Activated naive CD4-positive, alpha-beta T cell treated with anti-CD3 and anti-CD28 coated beads for 36 hours (primary cell): ENCODE measurements at regions of chr14 and their contacts with region 1.

Region 1: GRCh38 chr14:22505697-22506377 is 83.2 kb downstream of the DAD1 start:
- DNase-seq: no peak
- H3K4me3 Mint-ChIP-seq: peak overlapping the region; percentile 84
- H3K27ac Mint-ChIP-seq: peak overlapping the region; percentile 98
- H3K4me1 Mint-ChIP-seq: peaks cover 22% of the 10 kb centered on the region
- H3K27me3 Mint-ChIP-seq: no peaks in the 10 kb centered on the region

Region 2: DNA sequence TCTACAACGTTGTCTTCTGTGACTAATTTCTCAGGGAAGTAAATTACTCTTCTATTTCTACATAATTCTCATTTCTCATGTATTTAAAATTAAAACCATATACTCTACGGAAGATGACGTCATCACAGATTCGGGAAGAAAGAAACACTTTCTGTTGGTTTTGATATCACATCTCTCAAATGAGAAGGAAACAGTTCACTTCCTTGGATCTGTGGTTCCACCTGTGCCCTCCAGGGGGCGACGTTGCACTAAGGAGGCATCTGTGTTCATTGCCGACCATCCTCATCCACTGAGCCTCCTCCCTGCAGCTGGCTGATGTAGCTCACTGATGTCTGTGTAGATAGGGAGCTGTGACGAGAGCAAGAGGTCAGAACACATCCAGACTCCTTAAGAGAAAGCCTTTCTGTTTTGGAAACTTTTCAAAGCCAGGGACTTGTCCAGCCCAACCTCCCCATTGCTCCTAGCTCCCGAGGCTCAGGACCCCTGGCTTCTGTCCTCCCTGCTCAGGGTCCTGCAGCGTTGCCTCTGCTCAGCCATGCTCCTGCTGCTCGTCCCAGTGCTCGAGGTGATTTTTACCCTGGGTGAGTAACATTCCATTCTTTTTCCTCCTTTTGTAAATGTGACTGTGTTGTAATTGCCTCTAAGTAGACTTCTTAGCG is 659.5 kb before region 1 on chr14:
- CTCF ChIA-PET with region 1: no interaction called
- intact Hi-C with region 1: loop called (anchors 5 kb)
- DNase-seq: peak; percentile 88
- H3K4me3 Mint-ChIP-seq: peak overlapping the region; percentile 88
- H3K27ac Mint-ChIP-seq: peak overlapping the region; percentile 86
- H3K4me1 Mint-ChIP-seq: peaks cover 13% of the 10 kb centered on the region
- H3K27me3 Mint-ChIP-seq: peaks cover 15% of the 10 kb centered on the region

Region 3: DNA sequence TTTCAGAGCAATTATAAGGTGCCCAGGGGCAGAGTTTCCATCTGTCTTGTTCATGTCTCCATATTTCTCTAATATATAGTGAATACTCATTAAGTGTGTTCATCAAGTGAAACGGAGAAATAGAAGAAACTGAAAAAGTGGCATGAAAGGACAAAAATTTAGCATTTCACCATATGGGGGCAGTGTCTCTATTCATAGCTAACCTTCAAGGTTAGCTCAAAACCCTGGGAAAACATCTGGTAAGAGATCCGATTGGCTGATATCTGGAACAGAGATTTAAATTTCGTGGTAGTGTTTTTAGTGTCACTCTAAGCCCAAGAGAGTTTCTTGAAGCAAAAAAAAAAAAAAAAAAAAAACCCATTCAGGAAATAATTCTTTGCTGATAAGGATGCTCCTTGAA is 284.3 kb before region 1 on chr14:
- CTCF ChIA-PET with region 1: interaction called, 3 read pairs
- intact Hi-C with region 1: loop called (anchors 10 kb)
- DNase-seq: no peak
- H3K4me3 Mint-ChIP-seq: peak overlapping the region; percentile 69
- H3K27ac Mint-ChIP-seq: peak overlapping the region; percentile 72
- H3K4me1 Mint-ChIP-seq: peaks cover 7% of the 10 kb centered on the region
- H3K27me3 Mint-ChIP-seq: no peaks in the 10 kb centered on the region

Region 4: DNA sequence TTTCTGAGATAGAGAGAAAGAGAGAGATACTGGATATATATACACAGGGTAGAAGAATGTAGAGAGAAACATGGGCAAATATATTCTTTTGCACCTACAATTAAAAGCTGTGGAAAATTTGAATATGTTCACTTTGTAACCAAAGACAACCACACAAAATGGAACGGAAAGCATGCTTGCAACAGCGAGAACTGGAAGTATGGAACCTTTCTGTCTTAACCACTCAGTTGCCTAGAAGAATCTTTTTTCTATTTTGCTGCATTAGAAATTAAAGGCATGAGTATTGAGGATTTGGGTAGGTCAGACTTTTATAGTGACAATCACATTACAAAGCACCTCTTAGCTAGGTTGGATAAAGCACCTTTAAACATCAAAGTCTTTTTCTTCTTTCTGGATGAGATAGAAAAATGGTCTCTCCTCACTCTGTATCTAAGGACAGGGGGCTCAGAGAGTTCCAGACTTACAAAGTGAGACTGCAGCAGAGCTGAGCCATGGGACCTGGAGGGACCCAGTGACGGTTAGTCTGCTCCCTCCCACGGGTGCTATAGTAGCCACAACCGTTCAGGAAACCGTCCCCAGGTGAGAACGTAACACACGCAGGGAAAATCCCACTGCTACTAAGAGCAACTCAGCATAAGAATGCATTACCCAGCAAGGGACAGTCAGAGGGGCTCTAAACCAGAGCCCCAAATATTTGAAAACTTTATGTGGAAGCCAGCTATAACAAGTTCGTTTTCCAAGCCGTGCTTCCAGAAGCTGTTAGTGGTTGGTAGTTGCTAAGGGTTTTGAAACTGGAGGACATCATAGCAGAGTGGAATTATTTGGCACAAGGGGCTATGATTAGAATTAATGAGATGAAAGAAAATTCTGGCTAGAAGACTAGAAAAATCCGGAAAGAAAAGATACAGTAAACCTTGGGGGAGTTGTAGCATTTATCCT is 13.9 kb before region 1 on chr14:
- CTCF ChIA-PET with region 1: interaction called, 4 read pairs
- intact Hi-C with region 1: loop called (anchors 2 kb)
- DNase-seq: peak; percentile 53
- H3K4me3 Mint-ChIP-seq: peak overlapping the region; percentile 87
- H3K27ac Mint-ChIP-seq: peak overlapping the region; percentile 98
- H3K4me1 Mint-ChIP-seq: peaks cover 12% of the 10 kb centered on the region
- H3K27me3 Mint-ChIP-seq: no peaks in the 10 kb centered on the region

Region 5: DNA sequence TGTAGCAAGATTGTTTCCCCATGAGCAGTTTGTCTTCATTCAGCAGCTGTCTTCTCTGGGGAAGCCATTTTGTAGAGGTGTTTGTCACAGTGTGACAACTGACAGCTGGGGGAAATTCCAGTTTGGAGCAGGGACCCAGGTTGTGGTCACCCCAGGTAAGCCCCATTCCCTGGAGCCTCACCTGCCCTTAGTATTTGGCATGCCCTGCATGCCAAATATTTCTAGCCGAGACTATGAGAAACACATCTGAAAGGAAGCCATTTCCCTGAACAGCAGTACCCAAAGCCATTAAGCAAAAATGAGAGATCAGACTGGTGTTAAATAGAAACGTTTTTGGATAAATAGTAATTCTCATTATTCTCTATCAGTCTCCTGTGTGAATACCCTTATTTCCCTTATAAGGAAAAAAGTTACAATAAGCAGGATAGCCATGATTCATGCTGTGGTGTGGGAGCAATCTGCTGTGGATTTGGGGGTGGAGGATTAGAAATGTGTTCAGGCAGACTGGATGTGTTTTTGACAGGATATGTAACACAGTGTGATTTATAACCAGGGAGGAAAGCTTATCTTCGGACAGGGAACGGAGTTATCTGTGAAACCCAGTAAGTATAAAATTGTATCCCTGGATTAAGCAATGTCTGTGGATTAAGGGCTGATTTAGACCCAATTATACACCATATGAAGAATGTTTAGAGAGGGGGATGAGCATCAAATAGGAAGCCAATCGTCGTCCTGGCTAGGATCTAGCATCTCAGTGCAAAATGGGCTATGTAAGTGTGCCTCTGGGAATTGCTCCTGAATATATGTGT is 14.2 kb after region 1 on chr14:
- CTCF ChIA-PET with region 1: interaction called, 11 read pairs
- intact Hi-C with region 1: no loop called
- DNase-seq: no peak
- H3K4me3 Mint-ChIP-seq: peak overlapping the region; percentile 91
- H3K27ac Mint-ChIP-seq: peak overlapping the region; percentile 98
- H3K4me1 Mint-ChIP-seq: peaks cover 86% of the 10 kb centered on the region
- H3K27me3 Mint-ChIP-seq: no peaks in the 10 kb centered on the region

Region 6: GRCh38 chr14:22531451-22532344 is 25.9 kb after region 1 on chr14:
- CTCF ChIA-PET with region 1: interaction called, 16 read pairs
- intact Hi-C with region 1: loop called (anchors 2 kb)
- DNase-seq: peak; percentile 65
- H3K4me3 Mint-ChIP-seq: peak overlapping the region; percentile 77
- H3K27ac Mint-ChIP-seq: peak overlapping the region; percentile 98
- H3K4me1 Mint-ChIP-seq: peaks cover 82% of the 10 kb centered on the region
- H3K27me3 Mint-ChIP-seq: no peaks in the 10 kb centered on the region